Activated B cell treated with CpG ODN at 0.5 μM for 24 hours (primary cell): ENCODE measurements at regions of chr2 and their contacts with region 1.

Region 1: DNA sequence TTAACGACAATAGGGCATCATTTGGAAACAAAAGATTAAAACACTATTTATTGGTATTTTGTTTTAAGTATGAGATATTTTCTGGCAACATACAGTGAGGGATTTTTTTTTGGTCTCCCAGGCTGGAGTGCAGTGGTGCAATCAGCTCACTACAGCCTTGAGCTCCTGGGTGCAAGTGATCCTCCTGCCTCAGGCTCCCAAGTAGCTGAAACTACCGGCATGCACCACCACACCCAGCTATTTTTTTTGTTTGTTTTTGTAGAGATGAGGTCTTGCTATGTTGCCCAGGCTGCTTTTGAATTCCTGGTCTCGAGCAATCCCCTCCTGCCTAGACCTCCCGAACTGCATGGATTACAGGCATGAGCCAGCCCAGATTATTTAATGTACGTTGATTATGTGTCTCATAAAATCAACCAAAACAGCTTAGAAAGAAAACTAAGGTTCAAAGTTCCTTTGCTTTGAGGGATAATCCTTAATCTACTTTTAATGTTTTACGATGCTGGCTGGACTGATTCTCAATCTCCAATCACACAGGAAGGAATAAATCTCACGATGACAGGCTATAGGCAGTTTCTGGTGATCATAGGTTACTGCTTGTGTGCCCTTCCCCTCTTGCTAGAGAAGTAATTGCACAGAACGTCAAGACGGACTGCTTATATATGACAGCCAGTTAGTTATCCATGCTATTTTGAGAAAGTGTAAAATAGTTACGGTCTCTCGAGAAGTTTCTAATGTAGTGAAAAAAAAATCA is 43.0 kb downstream of the C2orf74 start:
- DNase-seq: no peak
- ATAC-seq: no peak
- H3K4me3 Mint-ChIP-seq: no peak overlapping the region
- H3K27ac Mint-ChIP-seq: no peak overlapping the region
- H3K4me1 Mint-ChIP-seq: no peaks in the 10 kb centered on the region
- H3K27me3 Mint-ChIP-seq: no peaks in the 10 kb centered on the region
- CTCF ChIP-seq: no peak

Region 2: GRCh38 chr2:61238219-61239012 is 33.5 kb after region 1 on chr2:
- CTCF ChIA-PET with region 1: no interaction called
- POLR2A ChIA-PET with region 1: no interaction called
- intact Hi-C with region 1: loop called (anchors 5 kb)
- DNase-seq: no peak
- ATAC-seq: no peak
- H3K4me3 Mint-ChIP-seq: no peak overlapping the region
- H3K27ac Mint-ChIP-seq: no peak overlapping the region
- H3K4me1 Mint-ChIP-seq: peaks cover 20% of the 10 kb centered on the region
- H3K27me3 Mint-ChIP-seq: no peaks in the 10 kb centered on the region
- CTCF ChIP-seq: no peak

Region 3: GRCh38 chr2:61272421-61273070 is 67.6 kb after region 1 on chr2:
- CTCF ChIA-PET with region 1: no interaction called
- POLR2A ChIA-PET with region 1: no interaction called
- intact Hi-C with region 1: no loop called
- DNase-seq: no peak
- ATAC-seq: no peak
- H3K4me3 Mint-ChIP-seq: no peak overlapping the region
- H3K27ac Mint-ChIP-seq: no peak overlapping the region
- H3K4me1 Mint-ChIP-seq: no peaks in the 10 kb centered on the region
- H3K27me3 Mint-ChIP-seq: no peaks in the 10 kb centered on the region
- CTCF ChIP-seq: no peak